CD8-positive, alpha-beta T cell (primary cell): ENCODE measurements at regions of chr11 and their contacts with region 1.

Region 1: GRCh38 chr11:119728651-119729580 is at the start of gene NECTIN1:
- DNase-seq: peak; percentile 67 to 90 (median 84)
- ATAC-seq: peak; percentile 86
- H3K4me3 ChIP-seq: peak within 1 kb of the TSS; percentile 56 to 88
- H3K4me3 Mint-ChIP-seq: peak within 1 kb of the TSS; percentile 94
- H3K27ac ChIP-seq: no peak within 1 kb of the TSS
- H3K27ac Mint-ChIP-seq: peak within 1 kb of the TSS; percentile 86
- H3K4me1 ChIP-seq: peaks cover 20% of the 10 kb centered on the region
- H3K4me1 Mint-ChIP-seq: peaks cover 19% of the 10 kb centered on the region
- H3K27me3 ChIP-seq: peaks cover 9 to 15% of the 10 kb centered on the region in 2 experiments
- H3K27me3 Mint-ChIP-seq: peaks cover 16% of the 10 kb centered on the region
- CTCF ChIP-seq: peak; percentile 96
- total RNA-seq, gene NECTIN1: 6.4 to 6.9 TPM

Region 2: DNA sequence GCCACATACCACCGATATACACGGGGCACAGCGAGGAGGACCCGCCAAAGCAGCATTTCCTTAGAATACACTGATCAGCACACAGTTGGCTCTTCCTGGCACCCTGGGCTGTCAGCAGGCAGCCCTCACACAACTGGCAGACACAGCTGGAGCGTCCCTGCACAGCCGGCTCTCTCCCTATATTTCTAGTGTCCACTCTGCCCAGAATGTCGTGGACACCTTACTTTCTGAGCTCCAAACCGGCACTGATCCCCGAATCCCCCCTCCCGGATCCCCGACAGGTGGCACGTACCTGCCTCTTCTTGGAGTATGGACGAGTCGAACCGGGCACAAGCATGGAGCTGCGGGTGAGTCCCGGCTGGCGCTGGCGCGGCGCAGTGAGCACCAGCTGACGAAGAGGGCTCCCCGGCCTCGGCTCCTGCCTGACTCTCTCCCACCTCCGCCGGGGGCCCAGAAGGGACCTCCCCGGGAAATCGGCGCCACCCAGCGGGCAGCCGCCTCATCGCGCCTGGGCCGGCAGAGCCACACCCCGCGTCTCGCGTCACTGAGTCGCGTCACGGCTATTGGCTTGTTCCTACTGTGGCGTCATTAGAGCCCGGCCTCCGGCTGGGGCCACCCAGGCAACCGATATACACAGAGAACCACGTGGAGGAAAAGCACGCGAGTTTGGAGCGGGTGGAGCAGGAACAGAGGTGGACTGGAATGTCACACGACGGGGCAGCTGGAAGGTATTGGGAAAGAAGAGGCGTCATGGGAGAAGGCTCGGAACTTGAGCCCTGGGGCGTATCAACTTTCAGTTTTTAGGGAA is 347.5 kb before region 1 on chr11 and contains the start of gene USP2:
- CTCF ChIA-PET with region 1: no interaction called
- POLR2A ChIA-PET with region 1: no interaction called
- intact Hi-C with region 1: loop called (anchors 5 to 10 kb)
- DNase-seq: peak; percentile 94 to 98 (median 97)
- ATAC-seq: peak; percentile 98
- H3K4me3 ChIP-seq: peak within 1 kb of the TSS; percentile 74 to 80
- H3K4me3 Mint-ChIP-seq: no peak within 1 kb of the TSS
- H3K27ac ChIP-seq: peak within 1 kb of the TSS; percentile 57 to 73
- H3K27ac Mint-ChIP-seq: peak within 1 kb of the TSS; percentile 21
- H3K4me1 ChIP-seq: peaks cover 16% of the 10 kb centered on the region
- H3K4me1 Mint-ChIP-seq: peaks cover 7% of the 10 kb centered on the region
- H3K27me3 ChIP-seq: peaks cover 0 to 14% of the 10 kb centered on the region in 2 experiments
- H3K27me3 Mint-ChIP-seq: no peaks in the 10 kb centered on the region
- CTCF ChIP-seq: peak; percentile 92
- total RNA-seq, gene USP2: 3.4 to 5.9 TPM

Region 3: GRCh38 chr11:119624102-119624615 is 104.8 kb before region 1 on chr11:
- CTCF ChIA-PET with region 1: interaction called, 22 read pairs
- POLR2A ChIA-PET with region 1: no interaction called
- intact Hi-C with region 1: no loop called
- DNase-seq: peak in 3 of 9 experiments; percentile 3 to 18 (median 11)
- ATAC-seq: no peak
- H3K4me3 ChIP-seq: no peak overlapping the region
- H3K4me3 Mint-ChIP-seq: no peak overlapping the region
- H3K27ac ChIP-seq: no peak overlapping the region
- H3K27ac Mint-ChIP-seq: no peak overlapping the region
- H3K4me1 ChIP-seq: no peaks in the 10 kb centered on the region
- H3K4me1 Mint-ChIP-seq: no peaks in the 10 kb centered on the region
- H3K27me3 ChIP-seq: no peaks in the 10 kb centered on the region
- H3K27me3 Mint-ChIP-seq: peaks cover 26% of the 10 kb centered on the region
- CTCF ChIP-seq: peak; percentile 66

Region 4: GRCh38 chr11:119666463-119667131 is 62.3 kb before region 1 on chr11:
- CTCF ChIA-PET with region 1: interaction called, 9 read pairs
- POLR2A ChIA-PET with region 1: no interaction called
- intact Hi-C with region 1: loop called (anchors 1 kb)
- DNase-seq: peak; percentile 28 to 75 (median 62)
- ATAC-seq: peak; percentile 69
- H3K4me3 ChIP-seq: no peak overlapping the region
- H3K4me3 Mint-ChIP-seq: no peak overlapping the region
- H3K27ac ChIP-seq: no peak overlapping the region
- H3K27ac Mint-ChIP-seq: no peak overlapping the region
- H3K4me1 ChIP-seq: no peaks in the 10 kb centered on the region
- H3K4me1 Mint-ChIP-seq: no peaks in the 10 kb centered on the region
- H3K27me3 ChIP-seq: no peaks in the 10 kb centered on the region
- H3K27me3 Mint-ChIP-seq: no peaks in the 10 kb centered on the region
- CTCF ChIP-seq: peak; percentile 69

Region 5: GRCh38 chr11:119741369-119742262 is 12.7 kb after region 1 on chr11:
- CTCF ChIA-PET with region 1: interaction called, 15 read pairs
- POLR2A ChIA-PET with region 1: interaction called, 3 read pairs
- intact Hi-C with region 1: loop called in 1 of 2 experiments (anchors 1 kb)
- DNase-seq: peak; percentile 31 to 77 (median 62)
- ATAC-seq: peak; percentile 71
- H3K4me3 ChIP-seq: no peak overlapping the region
- H3K4me3 Mint-ChIP-seq: peak overlapping the region; percentile 64
- H3K27ac ChIP-seq: no peak overlapping the region
- H3K27ac Mint-ChIP-seq: no peak overlapping the region
- H3K4me1 ChIP-seq: peaks cover 7% of the 10 kb centered on the region
- H3K4me1 Mint-ChIP-seq: peaks cover 13% of the 10 kb centered on the region
- H3K27me3 ChIP-seq: peaks cover 0 to 16% of the 10 kb centered on the region in 2 experiments
- H3K27me3 Mint-ChIP-seq: peaks cover 41% of the 10 kb centered on the region
- CTCF ChIP-seq: peak; percentile 75

Region 6: DNA sequence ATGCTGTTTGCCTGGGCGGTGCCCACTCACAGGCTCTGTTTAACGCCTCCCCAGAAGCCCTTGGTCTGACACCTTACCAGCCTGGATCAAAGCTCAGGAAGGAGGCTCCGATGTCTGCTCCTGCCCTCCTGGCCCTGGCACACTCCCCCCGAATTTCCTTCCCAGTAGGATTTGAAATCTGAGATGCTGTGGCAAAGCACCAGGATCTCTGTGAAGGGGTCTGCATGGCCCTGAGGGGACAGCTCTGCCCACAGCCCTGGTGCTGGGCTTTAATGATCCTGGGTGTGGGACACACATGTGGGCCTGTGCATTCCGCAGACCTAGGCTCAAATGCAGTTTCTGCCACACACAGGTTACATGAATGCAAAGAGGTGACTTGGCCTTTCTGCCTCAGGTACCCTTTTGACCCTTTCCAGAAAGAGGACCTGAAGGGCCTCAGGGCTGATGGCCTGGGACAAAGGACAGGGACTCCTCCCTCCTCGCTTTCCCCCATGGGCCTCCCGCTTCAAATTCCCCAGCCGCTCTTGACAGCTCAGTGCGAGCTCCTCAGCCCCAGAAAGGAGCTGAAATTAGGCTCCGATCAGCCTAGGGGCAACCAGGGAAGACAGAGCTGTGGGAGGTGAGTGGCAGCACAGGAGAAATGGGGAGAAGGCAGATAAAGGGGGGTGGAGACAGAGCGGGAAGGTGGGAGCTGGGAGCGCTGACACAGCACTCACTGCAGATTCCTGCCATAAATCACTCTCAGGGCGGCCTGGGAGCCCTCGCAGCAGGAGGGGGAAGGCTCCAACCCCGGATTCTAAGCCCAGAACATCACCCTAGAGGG is 367.7 kb after region 1 on chr11:
- CTCF ChIA-PET with region 1: no interaction called
- POLR2A ChIA-PET with region 1: no interaction called
- intact Hi-C with region 1: no loop called
- DNase-seq: no peak
- ATAC-seq: no peak
- H3K4me3 ChIP-seq: no peak overlapping the region
- H3K4me3 Mint-ChIP-seq: no peak overlapping the region
- H3K27ac ChIP-seq: no peak overlapping the region
- H3K27ac Mint-ChIP-seq: no peak overlapping the region
- H3K4me1 ChIP-seq: no peaks in the 10 kb centered on the region
- H3K4me1 Mint-ChIP-seq: no peaks in the 10 kb centered on the region
- H3K27me3 ChIP-seq: no peaks in the 10 kb centered on the region
- H3K27me3 Mint-ChIP-seq: peaks cover 16% of the 10 kb centered on the region
- CTCF ChIP-seq: no peak